Caco-2 (cell line): ENCODE measurements at regions of chr1 and their contacts with region 1.

Region 1: GRCh38 chr1:179081687-179082332 is at the start of gene TOR3A:
- DNase-seq: peak; percentile 93 to 94
- H3K4me3 ChIP-seq: peak within 1 kb of the TSS; percentile 97
- H3K4me3 Mint-ChIP-seq: peak within 1 kb of the TSS; percentile 98
- H3K27ac Mint-ChIP-seq: peak within 1 kb of the TSS; percentile 96
- H3K4me1 ChIP-seq: peaks cover 5% of the 10 kb centered on the region; the same call in 1 of the 2 replicates
- H3K4me1 Mint-ChIP-seq: peaks cover 9% of the 10 kb centered on the region
- H3K27me3 ChIP-seq: no peaks in the 10 kb centered on the region
- H3K27me3 Mint-ChIP-seq: no peaks in the 10 kb centered on the region
- CTCF ChIP-seq: no peak
- total RNA-seq, gene TOR3A: 25.0 and 25.2 TPM in 2 replicates

Region 2: DNA sequence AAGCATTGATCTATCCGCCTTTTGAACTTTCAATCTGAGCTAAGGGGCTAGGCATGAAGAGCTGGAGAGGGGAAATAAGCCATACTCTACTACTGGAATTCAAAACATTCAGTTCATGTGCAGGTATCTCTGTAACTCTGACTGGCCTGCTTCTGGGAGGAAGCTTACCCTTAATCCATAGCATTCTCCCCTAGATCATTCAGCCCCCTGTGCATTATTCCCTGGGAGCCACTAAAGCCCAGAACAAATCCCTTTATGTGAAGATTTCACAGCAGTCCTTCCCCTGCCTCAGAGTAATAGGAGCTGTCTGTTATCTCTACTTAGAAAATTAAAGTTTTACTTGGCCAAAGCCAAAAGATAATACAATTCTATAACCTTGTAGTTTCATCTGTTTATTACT is 1412.6 kb before region 1 on chr1:
- CTCF ChIA-PET with region 1: no interaction called
- POLR2A ChIA-PET with region 1: no interaction called
- intact Hi-C with region 1: loop called (anchors 5 kb)
- DNase-seq: no peak
- H3K4me3 ChIP-seq: no peak overlapping the region
- H3K4me3 Mint-ChIP-seq: no peak overlapping the region
- H3K27ac Mint-ChIP-seq: no peak overlapping the region
- H3K4me1 ChIP-seq: no peaks in the 10 kb centered on the region
- H3K4me1 Mint-ChIP-seq: no peaks in the 10 kb centered on the region
- H3K27me3 ChIP-seq: no peaks in the 10 kb centered on the region
- H3K27me3 Mint-ChIP-seq: peaks cover 5% of the 10 kb centered on the region
- CTCF ChIP-seq: no peak

Region 3: DNA sequence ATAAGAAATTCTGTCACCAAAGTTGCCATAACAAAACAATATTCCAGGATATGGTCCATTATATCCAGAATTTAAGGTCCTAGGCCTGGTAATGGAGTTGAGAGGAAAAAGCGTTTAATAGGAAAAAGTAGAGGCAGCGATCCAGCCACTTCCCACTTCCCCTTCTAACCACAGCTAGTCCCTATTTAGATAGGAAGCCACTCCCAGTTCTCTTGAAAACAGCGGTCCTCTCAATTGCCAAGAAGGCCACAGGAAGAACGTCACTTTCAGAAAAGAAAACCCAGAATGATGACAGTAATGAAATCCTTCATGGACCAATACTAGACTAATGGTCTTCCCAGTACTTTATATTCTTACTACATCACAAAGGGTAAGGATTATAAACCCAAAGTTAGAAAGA is 109.1 kb after region 1 on chr1:
- CTCF ChIA-PET with region 1: no interaction called
- POLR2A ChIA-PET with region 1: no interaction called
- intact Hi-C with region 1: loop called (anchors 2 kb)
- DNase-seq: no peak
- H3K4me3 ChIP-seq: no peak overlapping the region
- H3K4me3 Mint-ChIP-seq: no peak overlapping the region
- H3K27ac Mint-ChIP-seq: no peak overlapping the region
- H3K4me1 ChIP-seq: no peaks in the 10 kb centered on the region
- H3K4me1 Mint-ChIP-seq: no peaks in the 10 kb centered on the region
- H3K27me3 ChIP-seq: no peaks in the 10 kb centered on the region
- H3K27me3 Mint-ChIP-seq: no peaks in the 10 kb centered on the region
- CTCF ChIP-seq: no peak

Region 4: DNA sequence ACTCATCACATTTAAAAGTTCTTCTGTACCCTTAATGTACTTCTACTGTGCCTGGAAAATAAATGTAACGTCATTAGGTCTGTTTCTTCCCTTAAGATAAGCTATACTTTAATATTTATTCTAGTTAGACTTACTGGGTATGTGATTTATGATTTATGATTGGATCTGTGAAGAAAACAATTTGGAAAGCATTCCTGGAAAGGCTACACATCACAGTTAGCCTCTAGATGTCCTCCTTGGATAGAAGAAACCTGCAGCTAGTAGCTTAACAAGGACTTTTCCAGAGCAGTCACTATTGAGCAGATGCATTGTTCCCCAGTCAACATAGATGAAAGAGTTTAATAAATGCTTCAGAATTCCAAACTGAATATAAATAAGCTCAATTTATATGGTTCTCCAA is 169.9 kb after region 1 on chr1:
- CTCF ChIA-PET with region 1: interaction called, 5 read pairs
- POLR2A ChIA-PET with region 1: no interaction called
- intact Hi-C with region 1: loop called (anchors 2 kb)
- DNase-seq: peak in 1 of 2 experiments; percentile 52
- H3K4me3 ChIP-seq: no peak overlapping the region
- H3K4me3 Mint-ChIP-seq: no peak overlapping the region
- H3K27ac Mint-ChIP-seq: no peak overlapping the region
- H3K4me1 ChIP-seq: no peaks in the 10 kb centered on the region
- H3K4me1 Mint-ChIP-seq: no peaks in the 10 kb centered on the region
- H3K27me3 ChIP-seq: no peaks in the 10 kb centered on the region
- H3K27me3 Mint-ChIP-seq: no peaks in the 10 kb centered on the region
- CTCF ChIP-seq: peak; percentile 61 to 65

Region 5: DNA sequence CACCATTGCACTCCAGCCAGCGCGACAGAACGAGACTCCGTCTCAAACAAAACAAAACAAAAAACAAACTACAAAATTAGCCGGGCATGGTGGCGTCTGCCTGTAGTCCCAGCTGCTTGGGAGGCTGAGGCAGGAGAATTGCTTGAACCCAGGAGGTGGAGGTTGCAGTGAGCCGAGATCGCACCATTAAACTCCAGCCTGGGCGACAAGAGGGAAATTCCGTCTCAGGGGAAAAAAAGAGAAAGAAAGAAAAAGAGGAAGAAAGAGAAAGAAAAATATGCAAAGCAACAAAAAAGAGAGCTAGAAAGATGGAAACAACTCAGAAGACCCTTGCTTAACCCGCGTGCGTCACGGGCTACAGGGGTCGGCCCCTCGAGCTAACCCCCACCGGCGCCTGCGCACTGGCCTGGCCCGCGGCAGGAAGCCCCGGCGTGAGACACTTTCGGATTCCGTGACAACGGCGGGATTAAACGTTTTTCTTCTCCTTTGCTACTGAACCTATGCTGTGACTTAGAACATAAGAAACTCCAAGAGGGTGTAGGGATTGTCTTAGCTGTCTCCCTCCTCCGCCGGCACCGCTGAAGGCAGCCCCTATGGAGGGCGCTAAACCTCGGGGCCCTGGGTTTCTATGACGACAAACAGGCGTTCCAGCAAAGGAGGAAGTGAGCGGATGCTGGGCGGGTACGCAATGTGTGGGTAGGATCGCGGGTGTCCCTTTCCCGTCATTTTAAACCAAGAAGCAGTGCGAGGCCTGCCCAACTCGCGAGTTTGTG is 283.7 kb after region 1 on chr1 and contains the start of gene AXDND1:
- CTCF ChIA-PET with region 1: interaction called, 3 read pairs
- POLR2A ChIA-PET with region 1: no interaction called
- intact Hi-C with region 1: loop called (anchors 1 kb)
- DNase-seq: peak; percentile 86 to 87
- H3K4me3 ChIP-seq: peak within 1 kb of the TSS; percentile 70
- H3K4me3 Mint-ChIP-seq: peak within 1 kb of the TSS; percentile 98
- H3K27ac Mint-ChIP-seq: peak within 1 kb of the TSS; percentile 99
- H3K4me1 ChIP-seq: peaks cover 15% of the 10 kb centered on the region
- H3K4me1 Mint-ChIP-seq: no peaks in the 10 kb centered on the region
- H3K27me3 ChIP-seq: no peaks in the 10 kb centered on the region
- H3K27me3 Mint-ChIP-seq: no peaks in the 10 kb centered on the region
- CTCF ChIP-seq: peak; percentile 14 to 54
- total RNA-seq, gene AXDND1: not detected in 2 replicates

Region 6: DNA sequence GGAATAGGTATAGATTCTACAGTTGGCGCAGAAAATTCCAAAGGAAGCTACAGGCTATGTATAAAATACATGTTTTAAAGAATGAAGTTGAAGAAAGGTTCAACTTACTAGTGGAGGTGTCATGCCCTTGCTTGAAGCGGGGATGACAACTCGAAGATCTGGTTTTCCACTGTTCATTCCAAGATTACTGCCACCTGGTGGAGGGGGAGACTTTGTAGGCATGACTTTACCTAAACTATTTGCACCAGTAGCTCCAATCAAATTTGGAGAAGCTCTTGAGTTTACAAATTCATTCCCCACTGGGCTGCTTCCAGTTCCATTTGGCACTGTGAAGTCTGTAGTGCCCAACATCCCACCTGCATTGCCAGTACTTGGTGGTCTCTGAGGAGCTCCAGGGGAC is 365.7 kb after region 1 on chr1:
- CTCF ChIA-PET with region 1: no interaction called
- POLR2A ChIA-PET with region 1: no interaction called
- intact Hi-C with region 1: loop called (anchors 10 kb)
- DNase-seq: peak; percentile 44 to 62
- H3K4me3 ChIP-seq: no peak overlapping the region
- H3K4me3 Mint-ChIP-seq: no peak overlapping the region
- H3K27ac Mint-ChIP-seq: no peak overlapping the region
- H3K4me1 ChIP-seq: no peaks in the 10 kb centered on the region
- H3K4me1 Mint-ChIP-seq: no peaks in the 10 kb centered on the region
- H3K27me3 ChIP-seq: no peaks in the 10 kb centered on the region
- H3K27me3 Mint-ChIP-seq: peaks cover 3% of the 10 kb centered on the region
- CTCF ChIP-seq: peak; percentile 40 to 58

Region 7: DNA sequence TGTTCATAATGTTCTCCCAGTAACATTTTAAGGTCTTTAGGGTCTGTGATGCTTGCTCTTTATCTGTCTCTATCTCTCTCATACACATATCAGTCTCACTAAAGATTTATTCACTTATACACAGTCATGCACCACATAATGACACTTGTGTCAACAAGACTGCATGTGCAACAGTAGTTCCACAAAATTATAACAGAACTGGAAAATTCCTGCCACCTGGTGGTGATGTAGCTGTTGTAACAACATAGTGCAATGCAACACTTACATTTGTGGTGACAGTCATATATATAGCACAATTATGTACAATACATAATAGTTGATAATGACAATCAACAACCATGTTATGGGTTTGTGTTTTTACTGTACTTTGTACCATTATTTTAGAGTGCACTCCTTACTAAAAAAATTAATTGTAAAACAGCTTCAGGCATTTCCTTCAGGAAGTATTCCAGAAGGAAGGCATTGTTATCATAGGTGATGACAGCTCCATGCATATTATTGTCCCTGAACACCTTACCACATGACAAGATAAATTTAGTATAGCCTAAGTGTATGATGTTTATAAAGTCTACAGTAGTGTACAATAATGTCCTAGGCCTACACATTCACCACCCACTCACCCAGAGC is 517.9 kb after region 1 on chr1:
- CTCF ChIA-PET with region 1: no interaction called
- POLR2A ChIA-PET with region 1: no interaction called
- intact Hi-C with region 1: loop called (anchors 2 kb)
- DNase-seq: peak in 1 of 2 experiments; percentile 60
- H3K4me3 ChIP-seq: no peak overlapping the region
- H3K4me3 Mint-ChIP-seq: no peak overlapping the region
- H3K27ac Mint-ChIP-seq: no peak overlapping the region
- H3K4me1 ChIP-seq: no peaks in the 10 kb centered on the region
- H3K4me1 Mint-ChIP-seq: peaks cover 7% of the 10 kb centered on the region
- H3K27me3 ChIP-seq: no peaks in the 10 kb centered on the region
- H3K27me3 Mint-ChIP-seq: peaks cover 9% of the 10 kb centered on the region
- CTCF ChIP-seq: peak; percentile 50 to 53